Natural killer cell (primary cell): ENCODE measurements at regions of chr18 and their contacts with region 1.

Region 1: DNA sequence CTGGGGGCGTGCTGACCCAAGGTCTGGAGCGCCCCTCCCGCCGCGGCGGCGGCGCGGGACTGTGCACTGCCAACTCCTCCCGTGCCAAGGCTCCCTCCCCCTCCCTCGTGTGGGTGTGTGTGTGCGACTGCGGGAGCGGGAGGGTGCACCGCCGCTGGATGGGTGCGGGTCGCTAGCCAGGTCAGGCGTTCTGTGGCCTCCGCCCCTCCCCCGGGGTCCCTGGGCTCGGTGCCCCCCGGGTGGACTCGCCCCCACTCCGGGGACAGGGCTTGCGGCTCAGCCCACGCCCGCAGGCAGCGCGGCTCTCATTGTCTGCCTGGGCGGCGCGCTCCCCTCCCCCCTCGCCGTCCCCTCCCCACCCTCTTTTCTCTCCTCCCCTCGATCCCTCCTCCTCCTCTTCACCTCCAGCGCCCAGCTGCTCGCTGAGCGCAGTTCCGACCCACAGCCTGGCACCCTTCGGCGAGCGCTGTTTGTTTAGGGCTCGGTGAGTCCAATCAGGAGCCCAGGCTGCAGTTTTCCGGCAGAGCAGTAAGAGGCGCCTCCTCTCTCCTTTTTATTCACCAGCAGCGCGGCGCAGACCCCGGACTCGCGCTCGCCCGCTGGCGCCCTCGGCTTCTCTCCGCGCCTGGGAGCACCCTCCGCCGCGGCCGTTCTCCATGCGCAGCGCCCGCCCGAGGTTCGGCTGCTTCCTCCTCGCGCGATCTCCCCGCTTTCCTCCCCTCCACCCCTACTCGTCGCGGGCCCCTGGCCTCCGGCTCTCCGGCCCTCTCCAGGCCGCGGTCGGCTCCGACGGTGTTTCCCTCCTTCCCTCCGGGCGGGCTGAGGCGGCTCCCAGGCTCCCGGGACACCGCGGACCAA is at the start of gene GATA6:
- DNase-seq: peak in 1 of 2 donors; percentile 73
- ATAC-seq: peak; percentile 55 to 72 (median 71)
- H3K4me3 ChIP-seq: peak within 1 kb of the TSS; percentile 55
- H3K4me3 Mint-ChIP-seq: peak within 1 kb of the TSS; percentile 95
- H3K27ac ChIP-seq: no peak within 1 kb of the TSS
- H3K27ac Mint-ChIP-seq: peak within 1 kb of the TSS in 1 of 2 donors; percentile 84
- H3K4me1 ChIP-seq: peaks cover 58% of the 10 kb centered on the region
- H3K4me1 Mint-ChIP-seq: peaks cover 19 to 47% of the 10 kb centered on the region in 2 donors
- H3K27me3 ChIP-seq: peaks cover 64% of the 10 kb centered on the region
- H3K27me3 Mint-ChIP-seq: peaks cover 65 to 67% of the 10 kb centered on the region in 2 donors
- CTCF ChIP-seq: peak; percentile 38
- total RNA-seq, gene GATA6: 0.54 to 1.1 (median 1.0) TPM

Region 2: GRCh38 chr18:22015156-22015555 is 154.1 kb before region 1 on chr18:
- intact Hi-C with region 1: no loop called
- DNase-seq: no peak
- ATAC-seq: no peak
- H3K4me3 ChIP-seq: no peak overlapping the region
- H3K4me3 Mint-ChIP-seq: no peak overlapping the region
- H3K27ac ChIP-seq: no peak overlapping the region
- H3K27ac Mint-ChIP-seq: no peak overlapping the region
- H3K4me1 ChIP-seq: no peaks in the 10 kb centered on the region
- H3K4me1 Mint-ChIP-seq: no peaks in the 10 kb centered on the region
- H3K27me3 ChIP-seq: peaks cover 3% of the 10 kb centered on the region
- H3K27me3 Mint-ChIP-seq: peaks cover 22 to 31% of the 10 kb centered on the region in 2 donors
- CTCF ChIP-seq: no peak

Region 3: GRCh38 chr18:22223254-22223960 is 54.2 kb after region 1 on chr18:
- intact Hi-C with region 1: no loop called
- DNase-seq: peak in 1 of 2 donors; percentile 32
- ATAC-seq: peak in 2 of 3 donors; percentile 38 to 64
- H3K4me3 ChIP-seq: no peak overlapping the region
- H3K4me3 Mint-ChIP-seq: no peak overlapping the region
- H3K27ac ChIP-seq: no peak overlapping the region
- H3K27ac Mint-ChIP-seq: no peak overlapping the region
- H3K4me1 ChIP-seq: peaks cover 21% of the 10 kb centered on the region
- H3K4me1 Mint-ChIP-seq: peaks cover 25 to 26% of the 10 kb centered on the region in 2 donors
- H3K27me3 ChIP-seq: no peaks in the 10 kb centered on the region
- H3K27me3 Mint-ChIP-seq: peaks cover 8 to 15% of the 10 kb centered on the region in 2 donors
- CTCF ChIP-seq: no peak

Region 4: GRCh38 chr18:22267697-22268096 is 98.5 kb after region 1 on chr18:
- intact Hi-C with region 1: loop called (anchors 10 kb)
- DNase-seq: no peak
- ATAC-seq: no peak
- H3K4me3 ChIP-seq: no peak overlapping the region
- H3K4me3 Mint-ChIP-seq: no peak overlapping the region
- H3K27ac ChIP-seq: no peak overlapping the region
- H3K27ac Mint-ChIP-seq: peak overlapping the region in 1 of 2 donors; percentile 41
- H3K4me1 ChIP-seq: peaks cover 25% of the 10 kb centered on the region
- H3K4me1 Mint-ChIP-seq: peaks cover 24% of the 10 kb centered on the region in 2 donors
- H3K27me3 ChIP-seq: no peaks in the 10 kb centered on the region
- H3K27me3 Mint-ChIP-seq: peaks cover 28 to 41% of the 10 kb centered on the region in 2 donors
- CTCF ChIP-seq: no peak

Region 5: GRCh38 chr18:22348521-22349316 is 179.5 kb after region 1 on chr18:
- intact Hi-C with region 1: loop called (anchors 10 kb)
- DNase-seq: peak; percentile 34 to 43
- ATAC-seq: peak in 1 of 3 donors; percentile 3
- H3K4me3 ChIP-seq: peak overlapping the region; percentile 79
- H3K4me3 Mint-ChIP-seq: peak overlapping the region; percentile 92
- H3K27ac ChIP-seq: peak overlapping the region; percentile 94
- H3K27ac Mint-ChIP-seq: peak overlapping the region; percentile 92 to 97
- H3K4me1 ChIP-seq: peaks cover 44% of the 10 kb centered on the region
- H3K4me1 Mint-ChIP-seq: peaks cover 65% of the 10 kb centered on the region in 2 donors
- H3K27me3 ChIP-seq: no peaks in the 10 kb centered on the region
- H3K27me3 Mint-ChIP-seq: no peaks in the 10 kb centered on the region
- CTCF ChIP-seq: no peak

Region 6: DNA sequence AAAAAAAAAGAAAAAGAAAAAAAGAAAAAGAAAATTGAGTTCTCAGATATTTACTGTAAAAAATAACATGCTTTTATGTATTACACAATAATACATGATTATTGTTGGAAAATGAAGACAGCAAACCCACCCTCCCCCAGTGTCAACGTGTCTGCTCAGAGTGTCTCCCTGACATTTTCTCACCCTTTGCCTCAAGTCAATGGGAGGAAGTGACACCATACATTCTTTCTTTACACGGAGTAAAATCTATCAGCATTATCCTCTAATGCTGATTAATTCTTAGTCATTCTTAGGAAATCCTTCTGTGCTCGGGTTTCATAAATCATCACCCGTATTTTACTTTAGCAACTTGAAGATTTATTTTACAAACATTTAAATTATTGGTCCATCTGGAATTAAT is 216.5 kb after region 1 on chr18:
- intact Hi-C with region 1: loop called (anchors 10 kb)
- DNase-seq: peak; percentile 38 to 51
- ATAC-seq: peak; percentile 95 to 99 (median 95)
- H3K4me3 ChIP-seq: no peak overlapping the region
- H3K4me3 Mint-ChIP-seq: peak overlapping the region; percentile 40
- H3K27ac ChIP-seq: peak overlapping the region; percentile 15
- H3K27ac Mint-ChIP-seq: peak overlapping the region; percentile 83
- H3K4me1 ChIP-seq: peaks cover 16% of the 10 kb centered on the region
- H3K4me1 Mint-ChIP-seq: peaks cover 46% of the 10 kb centered on the region in 2 donors
- H3K27me3 ChIP-seq: no peaks in the 10 kb centered on the region
- H3K27me3 Mint-ChIP-seq: no peaks in the 10 kb centered on the region
- CTCF ChIP-seq: no peak

Region 7: DNA sequence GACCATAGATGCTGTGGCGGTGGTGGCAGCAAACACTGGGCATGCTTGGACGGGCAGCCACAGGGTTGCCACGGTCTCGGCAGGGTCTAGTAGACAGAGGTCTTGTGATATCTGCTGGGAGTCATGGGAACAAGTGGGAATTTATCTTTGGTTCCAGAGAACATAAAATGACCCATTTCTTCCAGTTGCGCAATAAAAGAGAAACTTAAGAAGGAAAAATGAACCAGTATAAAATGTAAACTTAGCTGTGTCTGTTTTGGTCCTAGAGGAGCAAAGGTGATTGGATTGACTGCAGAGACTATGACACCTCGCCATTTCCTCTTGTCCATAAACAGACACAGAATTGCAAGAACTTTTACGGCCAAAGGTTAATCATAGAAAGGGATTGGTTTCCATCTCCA is 631.3 kb after region 1 on chr18:
- intact Hi-C with region 1: no loop called
- DNase-seq: no peak
- ATAC-seq: no peak
- H3K4me3 ChIP-seq: no peak overlapping the region
- H3K4me3 Mint-ChIP-seq: no peak overlapping the region
- H3K27ac ChIP-seq: no peak overlapping the region
- H3K27ac Mint-ChIP-seq: no peak overlapping the region
- H3K4me1 ChIP-seq: no peaks in the 10 kb centered on the region
- H3K4me1 Mint-ChIP-seq: no peaks in the 10 kb centered on the region
- H3K27me3 ChIP-seq: peaks cover 2% of the 10 kb centered on the region
- H3K27me3 Mint-ChIP-seq: peaks cover 0 to 5% of the 10 kb centered on the region in 2 donors
- CTCF ChIP-seq: no peak